Caco-2 (cell line): ENCODE measurements at regions of chr21 and their contacts with region 1.

Region 1: GRCh38 chr21:14382835-14383594 is at the start of gene HSPA13:
- DNase-seq: peak; percentile 97 to 99
- H3K4me3 ChIP-seq: peak within 1 kb of the TSS; percentile 76
- H3K4me3 Mint-ChIP-seq: peak within 1 kb of the TSS; percentile 99
- H3K27ac Mint-ChIP-seq: peak within 1 kb of the TSS; percentile 99
- H3K4me1 ChIP-seq: no peaks in the 10 kb centered on the region
- H3K4me1 Mint-ChIP-seq: no peaks in the 10 kb centered on the region
- H3K27me3 ChIP-seq: no peaks in the 10 kb centered on the region
- H3K27me3 Mint-ChIP-seq: peaks cover 3% of the 10 kb centered on the region
- CTCF ChIP-seq: peak in 1 of 2 experiments; percentile 16
- total RNA-seq, gene HSPA13: 22.7 and 27.4 TPM in 2 replicates

Region 2: GRCh38 chr21:14259747-14260146 is 123.3 kb before region 1 on chr21:
- CTCF ChIA-PET with region 1: interaction called, 4 read pairs
- POLR2A ChIA-PET with region 1: no interaction called
- intact Hi-C with region 1: loop called (anchors 10 kb)
- DNase-seq: peak; percentile 40 to 46
- H3K4me3 ChIP-seq: no peak overlapping the region
- H3K4me3 Mint-ChIP-seq: no peak overlapping the region
- H3K27ac Mint-ChIP-seq: no peak overlapping the region
- H3K4me1 ChIP-seq: peaks cover 20% of the 10 kb centered on the region
- H3K4me1 Mint-ChIP-seq: no peaks in the 10 kb centered on the region
- H3K27me3 ChIP-seq: no peaks in the 10 kb centered on the region
- H3K27me3 Mint-ChIP-seq: no peaks in the 10 kb centered on the region
- CTCF ChIP-seq: peak; percentile 36 to 47